Activated CD4-positive, alpha-beta T cell treated with anti-CD3 and anti-CD28 coated beads, Interleukin-2, amount 10 ng/mL, durations not matched to agents 7 days and 5 days (primary cell): ENCODE measurements at regions of chr12 and their contacts with region 1.

Region 1: DNA sequence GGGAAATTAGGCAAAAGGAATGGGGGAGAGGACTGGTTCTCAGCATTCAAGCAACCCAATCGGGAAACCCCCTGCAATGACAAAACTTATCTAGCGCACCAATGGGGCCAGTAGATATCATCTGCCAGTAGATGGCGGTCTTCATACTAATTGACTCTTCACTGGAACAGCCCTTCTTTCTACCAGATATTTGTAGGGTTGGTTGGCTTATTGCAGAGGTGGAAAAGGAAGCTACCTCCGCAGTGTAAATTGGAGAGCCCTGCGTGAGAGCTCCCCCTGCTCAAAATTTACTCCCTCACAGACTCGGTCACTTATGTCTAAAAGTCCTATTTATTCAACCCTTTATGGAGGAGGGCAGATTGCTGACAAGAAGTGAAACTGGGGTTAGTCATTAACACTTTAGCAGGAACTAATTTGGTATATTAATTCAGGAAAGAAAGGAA is 166.1 kb upstream of the CCND2 start:
- DNase-seq: peak; percentile 87
- H3K4me3 Mint-ChIP-seq: no peak overlapping the region
- H3K27ac Mint-ChIP-seq: peak overlapping the region; percentile 87
- H3K4me1 Mint-ChIP-seq: peaks cover 58% of the 10 kb centered on the region
- H3K27me3 Mint-ChIP-seq: peaks cover 5% of the 10 kb centered on the region

Region 2: DNA sequence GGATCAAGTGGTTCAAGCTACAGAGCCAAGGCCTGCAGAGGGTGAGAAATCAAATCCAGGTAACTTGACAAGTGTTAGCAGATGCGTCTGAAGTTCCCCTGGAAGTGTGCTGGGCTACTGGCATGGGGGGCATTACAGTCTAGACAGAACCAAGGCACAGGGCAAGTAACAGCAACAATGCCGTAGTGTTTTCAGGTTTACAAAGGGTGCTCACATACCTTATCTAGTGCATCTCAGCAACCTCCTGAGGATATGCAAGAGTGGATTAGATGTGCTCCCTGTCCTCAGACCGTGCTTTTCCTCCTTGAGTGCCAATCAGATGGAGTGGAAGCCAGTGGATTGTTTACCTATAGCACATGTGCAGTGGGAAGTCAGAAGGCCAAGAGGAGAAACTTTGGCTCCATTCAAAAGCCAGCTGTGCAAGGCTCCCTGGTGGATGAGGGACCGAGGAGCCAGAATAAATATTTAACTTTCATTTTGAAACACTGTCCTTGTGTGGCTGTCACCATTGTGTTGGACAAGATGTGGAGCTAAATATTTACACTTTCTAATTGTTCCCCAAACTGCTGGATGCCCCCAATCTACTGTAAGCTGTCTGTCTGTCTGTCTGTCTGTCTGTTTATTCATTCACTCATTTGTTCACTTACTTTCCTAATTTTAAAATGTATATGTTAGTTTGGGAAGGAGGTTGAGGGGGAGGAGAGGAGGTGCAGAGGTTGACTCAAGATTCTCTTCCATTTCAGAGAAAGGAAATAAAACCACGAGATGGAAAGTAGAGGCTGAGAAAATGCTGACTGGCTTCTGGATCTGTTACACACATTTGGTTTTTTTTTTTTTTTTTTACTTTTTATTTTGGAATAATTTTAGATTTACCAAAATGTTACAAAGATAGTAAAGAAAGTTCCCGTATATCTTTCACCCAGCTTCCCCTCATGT is 50.3 kb before region 1 on chr12:
- CTCF ChIA-PET with region 1: no interaction called
- POLR2A ChIA-PET with region 1: no interaction called
- DNase-seq: no peak
- H3K4me3 Mint-ChIP-seq: no peak overlapping the region
- H3K27ac Mint-ChIP-seq: peak overlapping the region; percentile 43
- H3K4me1 Mint-ChIP-seq: peaks cover 13% of the 10 kb centered on the region
- H3K27me3 Mint-ChIP-seq: no peaks in the 10 kb centered on the region

Region 3: GRCh38 chr12:4091016-4091743 is 16.3 kb before region 1 on chr12:
- CTCF ChIA-PET with region 1: interaction called, 12 read pairs
- POLR2A ChIA-PET with region 1: no interaction called
- DNase-seq: no peak
- H3K4me3 Mint-ChIP-seq: no peak overlapping the region
- H3K27ac Mint-ChIP-seq: no peak overlapping the region
- H3K4me1 Mint-ChIP-seq: peaks cover 4% of the 10 kb centered on the region
- H3K27me3 Mint-ChIP-seq: peaks cover 15% of the 10 kb centered on the region

Region 4: GRCh38 chr12:4118017-4118510 is 10.6 kb after region 1 on chr12:
- CTCF ChIA-PET with region 1: interaction called, 22 read pairs
- POLR2A ChIA-PET with region 1: no interaction called
- DNase-seq: peak; percentile 28
- H3K4me3 Mint-ChIP-seq: peak overlapping the region; percentile 58
- H3K27ac Mint-ChIP-seq: peak overlapping the region; percentile 90
- H3K4me1 Mint-ChIP-seq: peaks cover 67% of the 10 kb centered on the region
- H3K27me3 Mint-ChIP-seq: no peaks in the 10 kb centered on the region

Region 5: DNA sequence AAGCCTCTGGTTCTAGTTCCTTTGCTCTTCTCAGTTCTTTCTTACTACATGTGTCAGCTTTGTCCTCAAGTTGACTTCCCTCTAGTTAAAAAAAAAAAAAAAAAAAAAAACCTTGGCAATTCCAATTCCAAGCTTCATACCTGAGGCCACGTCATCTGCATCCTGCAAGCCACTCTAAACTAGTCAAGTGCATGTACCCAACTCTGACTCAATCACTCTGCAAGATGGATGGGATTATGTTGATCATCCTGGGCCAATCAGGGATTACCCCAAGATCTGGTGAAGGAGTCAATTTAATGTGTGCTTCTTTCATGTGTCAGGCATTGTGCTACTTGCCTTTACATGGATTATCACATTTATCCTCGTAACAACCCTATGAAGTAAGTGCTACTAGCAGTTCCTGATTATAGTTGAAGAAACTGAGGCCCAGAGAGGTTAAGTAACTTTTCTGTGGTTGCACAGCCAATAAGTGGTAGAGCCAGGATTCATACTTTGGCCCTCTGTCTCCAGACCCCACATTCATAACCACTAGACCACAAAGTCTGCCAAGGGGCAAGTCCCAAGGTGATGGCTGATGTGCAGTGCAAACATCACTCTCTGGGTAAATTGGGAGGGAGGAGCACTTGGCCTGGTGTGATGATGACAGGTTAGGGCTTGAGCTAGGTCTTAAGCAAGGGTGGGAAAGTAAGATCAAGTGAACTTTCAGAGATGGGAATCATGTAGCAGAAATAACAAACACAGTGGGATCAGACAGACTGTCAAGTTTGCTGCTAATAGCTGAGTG is 148.8 kb after region 1 on chr12:
- CTCF ChIA-PET with region 1: no interaction called
- POLR2A ChIA-PET with region 1: no interaction called
- DNase-seq: no peak
- H3K4me3 Mint-ChIP-seq: no peak overlapping the region
- H3K27ac Mint-ChIP-seq: no peak overlapping the region
- H3K4me1 Mint-ChIP-seq: peaks cover 6% of the 10 kb centered on the region
- H3K27me3 Mint-ChIP-seq: peaks cover 8% of the 10 kb centered on the region